K562 (cell line): ENCODE measurements at regions of chr2 and their contacts with region 1.

Region 1: DNA sequence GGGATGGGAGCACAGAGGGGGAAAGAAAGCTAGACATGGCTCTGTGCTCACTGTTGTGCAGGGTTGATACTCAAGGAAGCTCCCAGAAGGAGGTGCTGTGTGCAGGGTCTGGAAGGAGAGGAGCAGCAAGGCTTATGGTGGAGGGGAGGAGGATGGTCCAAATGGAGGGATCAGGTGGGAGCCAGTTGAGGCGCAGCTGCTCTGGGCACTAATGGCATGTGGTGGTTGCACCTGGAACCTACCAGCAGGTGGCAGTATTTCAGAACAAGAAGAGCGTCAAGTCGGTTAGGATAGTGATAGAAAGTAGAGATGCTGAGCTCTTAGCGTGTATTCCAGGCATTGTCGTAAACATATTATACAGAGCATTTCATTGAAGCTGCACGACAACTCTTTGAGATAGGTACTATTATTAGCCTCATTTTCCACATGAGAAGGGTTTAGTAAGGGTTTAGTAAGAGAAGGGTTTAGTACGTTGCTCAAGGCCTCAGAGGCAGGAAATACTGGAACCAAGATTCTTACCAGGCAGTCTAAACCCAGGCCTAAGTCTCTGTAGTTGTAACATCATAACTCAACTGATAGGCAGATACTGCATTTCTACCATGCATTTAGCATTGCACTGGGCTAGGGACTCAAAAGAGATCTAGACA is 223.7 kb downstream of the CYP26B1 start:
- DNase-seq: peak; percentile 72 to 79 (median 78)
- ATAC-seq: peak; percentile 95
- H3K4me3 ChIP-seq: no peak overlapping the region
- H3K27ac ChIP-seq: no peak overlapping the region
- H3K4me1 ChIP-seq: no peaks in the 10 kb centered on the region; a peak in 1 of 5 replicates
- H3K27me3 ChIP-seq: peaks cover 2 to 17% of the 10 kb centered on the region in 2 experiments; a peak in 3 of 5 replicates
- CTCF ChIP-seq: peak; percentile 78 to 84 (median 81)
- EP300 ChIP-seq: no peak
- POLR2A ChIP-seq: no peak
- RAD21 ChIP-seq: peak; percentile 86 to 89

Region 2: DNA sequence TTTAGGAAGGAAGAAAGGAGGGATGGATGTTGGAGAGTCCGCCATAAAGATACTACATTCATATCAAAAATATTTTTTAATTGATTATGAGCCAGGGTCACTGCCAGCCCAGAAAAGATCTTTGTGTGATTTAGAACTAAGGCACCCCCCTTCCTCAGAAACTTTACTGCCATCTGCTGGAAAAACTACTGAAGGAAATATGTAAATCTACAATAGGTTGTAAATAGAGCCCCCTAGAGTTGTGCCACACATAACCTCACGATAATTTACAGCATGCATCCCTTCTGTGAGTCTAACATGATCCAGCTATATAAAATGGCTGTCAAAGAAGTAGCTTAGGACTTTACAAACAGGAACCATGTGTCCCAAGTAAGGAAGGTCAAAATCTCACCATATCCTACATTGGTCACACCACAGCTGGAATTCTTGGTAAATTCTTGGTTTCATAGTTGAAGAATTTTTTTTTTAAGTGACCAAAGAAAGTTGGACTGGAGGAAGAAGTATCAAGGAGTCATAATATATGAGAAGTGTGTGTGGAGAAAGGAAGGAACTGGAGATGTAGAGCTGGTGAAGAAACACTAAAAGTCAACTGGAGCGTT is 71.2 kb after region 1 on chr2:
- CTCF ChIA-PET with region 1: interaction called, 8 read pairs
- POLR2A ChIA-PET with region 1: no interaction called
- in situ Hi-C with region 1: no loop called
- intact Hi-C with region 1: loop called (anchors 1 kb)
- DNase-seq: peak in 2 of 4 experiments; percentile 5 to 19
- ATAC-seq: peak; percentile 55; the same call in 2 of the 3 replicates
- H3K4me3 ChIP-seq: no peak overlapping the region
- H3K27ac ChIP-seq: no peak overlapping the region
- H3K4me1 ChIP-seq: no peaks in the 10 kb centered on the region
- H3K27me3 ChIP-seq: peaks cover 0 to 4% of the 10 kb centered on the region in 2 experiments; a peak in 1 of 5 replicates
- CTCF ChIP-seq: peak; percentile 51 to 91 (median 89); a peak in 5 of 6 replicates
- EP300 ChIP-seq: no peak
- POLR2A ChIP-seq: no peak
- RAD21 ChIP-seq: peak; percentile 67 to 80

Region 3: DNA sequence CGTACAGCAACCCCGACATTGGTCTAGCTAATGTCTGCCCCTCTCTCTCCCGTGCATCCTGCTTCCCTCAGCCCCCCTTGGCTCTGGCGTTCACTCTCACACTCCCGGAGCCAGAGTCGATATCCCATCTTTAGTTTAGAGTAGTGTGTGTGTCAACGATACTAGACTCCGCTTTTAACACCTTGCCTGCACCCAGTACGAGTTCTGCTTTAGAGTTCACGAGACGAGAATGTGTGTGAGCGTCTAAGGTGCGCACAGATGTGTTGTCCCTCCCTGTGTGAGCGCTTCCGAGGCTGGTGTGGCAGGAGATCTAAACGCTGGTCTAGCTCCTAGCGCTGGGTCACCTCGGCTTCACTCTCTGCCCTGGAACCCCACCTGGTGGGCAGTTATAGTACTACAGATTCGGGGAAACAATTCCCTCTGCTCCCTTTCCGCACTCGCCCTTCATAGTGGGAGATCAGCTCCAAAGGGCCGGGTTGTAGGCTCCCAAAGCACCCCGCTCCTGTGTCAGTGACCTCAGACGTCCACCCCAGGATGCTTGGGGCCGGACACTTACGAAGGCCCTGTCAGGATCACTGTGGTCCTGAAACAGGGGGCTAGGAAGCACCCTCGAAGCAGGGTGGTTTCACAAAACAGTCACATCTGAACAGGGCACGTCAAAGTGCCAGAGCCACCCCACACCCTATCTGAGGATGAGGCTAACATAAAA is 226.3 kb after region 1 on chr2:
- CTCF ChIA-PET with region 1: no interaction called
- POLR2A ChIA-PET with region 1: interaction called, 3 read pairs
- in situ Hi-C with region 1: loop called (anchors 10 kb)
- intact Hi-C with region 1: loop called (anchors 1 kb)
- DNase-seq: peak; percentile 74 to 81 (median 76)
- ATAC-seq: peak; percentile 93
- H3K4me3 ChIP-seq: no peak overlapping the region
- H3K27ac ChIP-seq: no peak overlapping the region
- H3K4me1 ChIP-seq: peaks cover 0 to 20% of the 10 kb centered on the region in 2 experiments; a peak in 2 of 5 replicates
- H3K27me3 ChIP-seq: peaks cover 13 to 63% of the 10 kb centered on the region in 2 experiments; a peak in 4 of 5 replicates
- CTCF ChIP-seq: peak; percentile 82 to 87 (median 83)
- EP300 ChIP-seq: no peak
- POLR2A ChIP-seq: no peak
- RAD21 ChIP-seq: peak; percentile 92 to 94

Region 4: GRCh38 chr2:72579591-72580180 is 655.7 kb after region 1 on chr2:
- CTCF ChIA-PET with region 1: interaction called, 7 read pairs
- POLR2A ChIA-PET with region 1: no interaction called
- in situ Hi-C with region 1: loop called (anchors 10 kb)
- intact Hi-C with region 1: loop called (anchors 1 kb)
- DNase-seq: peak in 3 of 4 experiments; percentile 7 to 62 (median 17)
- ATAC-seq: peak; percentile 77
- H3K4me3 ChIP-seq: no peak overlapping the region
- H3K27ac ChIP-seq: no peak overlapping the region
- H3K4me1 ChIP-seq: no peaks in the 10 kb centered on the region
- H3K27me3 ChIP-seq: no peaks in the 10 kb centered on the region
- CTCF ChIP-seq: peak; percentile 49 to 81 (median 54); a peak in 4 of 6 replicates
- EP300 ChIP-seq: no peak
- POLR2A ChIP-seq: no peak
- RAD21 ChIP-seq: peak; percentile 91 to 94

Region 5: DNA sequence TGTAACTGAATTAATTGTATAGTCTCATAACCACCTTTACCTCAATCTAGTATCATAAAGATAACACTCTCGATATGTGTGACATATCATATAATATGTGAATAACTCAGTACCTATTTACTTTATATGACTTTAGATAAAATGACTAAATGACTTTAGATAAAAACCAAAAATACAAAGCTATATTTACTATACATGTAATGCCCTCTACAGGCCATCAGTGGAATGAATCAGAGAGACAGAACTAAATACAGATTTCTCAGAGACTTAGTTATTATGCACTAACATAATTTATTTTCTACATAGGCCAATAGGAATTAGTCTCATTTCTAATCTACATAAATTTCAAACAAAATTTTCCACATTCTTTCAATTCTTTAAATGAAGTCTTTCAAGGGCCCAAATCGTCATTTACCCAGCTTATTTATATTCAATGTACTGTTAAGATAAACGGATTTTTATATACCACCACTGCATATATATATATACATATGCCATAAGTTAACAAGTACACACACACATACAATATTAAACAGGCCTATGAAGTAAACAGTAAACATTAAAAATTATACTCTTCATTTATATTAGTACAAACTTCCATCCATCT is 681.9 kb after region 1 on chr2:
- CTCF ChIA-PET with region 1: interaction called, 3 read pairs
- POLR2A ChIA-PET with region 1: no interaction called
- in situ Hi-C with region 1: no loop called
- intact Hi-C with region 1: loop called (anchors 10 kb)
- DNase-seq: peak; percentile 11 to 24 (median 19)
- ATAC-seq: no peak
- H3K4me3 ChIP-seq: no peak overlapping the region
- H3K27ac ChIP-seq: no peak overlapping the region
- H3K4me1 ChIP-seq: no peaks in the 10 kb centered on the region; a peak in 1 of 5 replicates
- H3K27me3 ChIP-seq: no peaks in the 10 kb centered on the region
- CTCF ChIP-seq: peak; percentile 26 to 72 (median 34); a peak in 4 of 6 replicates
- EP300 ChIP-seq: no peak
- POLR2A ChIP-seq: no peak
- RAD21 ChIP-seq: peak in 1 of 2 experiments; percentile 52; a peak in 2 of 4 replicates

Region 6: GRCh38 chr2:72745679-72746368 is 821.8 kb after region 1 on chr2:
- CTCF ChIA-PET with region 1: no interaction called
- POLR2A ChIA-PET with region 1: no interaction called
- in situ Hi-C with region 1: no loop called
- intact Hi-C with region 1: loop called (anchors 5 kb)
- DNase-seq: peak; percentile 17 to 76 (median 32)
- ATAC-seq: 0 out of 3 replicates have a peak, but pooled peaks have one; percentile 56
- H3K4me3 ChIP-seq: no peak overlapping the region
- H3K27ac ChIP-seq: no peak overlapping the region
- H3K4me1 ChIP-seq: no peaks in the 10 kb centered on the region
- H3K27me3 ChIP-seq: no peaks in the 10 kb centered on the region
- CTCF ChIP-seq: peak; percentile 38 to 81 (median 54); a peak in 5 of 6 replicates
- EP300 ChIP-seq: no peak
- POLR2A ChIP-seq: no peak
- RAD21 ChIP-seq: peak; percentile 84 to 92